ENCODE measurements at regions of chr12 and their contacts with region 1.

Region 1: DNA sequence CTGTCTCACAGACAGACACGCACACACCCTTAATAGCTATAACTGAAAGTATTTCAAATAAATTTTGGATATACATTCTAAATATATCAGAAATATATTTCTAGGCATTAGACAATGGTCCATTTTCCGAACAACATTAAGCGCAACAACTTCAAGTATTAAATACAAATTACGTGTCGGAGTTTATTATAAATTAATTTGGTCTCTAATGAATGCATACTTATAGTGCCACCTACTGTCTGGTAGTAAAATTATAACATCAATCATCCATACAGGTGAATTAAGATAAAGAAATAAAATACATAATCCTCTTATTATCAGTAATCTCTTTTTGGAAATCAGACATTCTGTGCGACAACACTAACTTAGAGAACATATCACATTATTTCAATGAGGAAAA is 27.2 kb upstream of the CMAS start:
- DNase-seq: no peak
- H3K4me3 ChIP-seq: no peak overlapping the region
- H3K27ac ChIP-seq: no peak overlapping the region
- H3K4me1 ChIP-seq: peaks cover 6% of the 10 kb centered on the region
- H3K27me3 ChIP-seq: no peaks in the 10 kb centered on the region
- CTCF ChIP-seq: no peak

Region 2: GRCh38 chr12:21697904-21698630 is 320.8 kb before region 1 on chr12:
- dilution Hi-C with region 1: loop called (anchors 25 kb)
- DNase-seq: no peak
- H3K4me3 ChIP-seq: no peak overlapping the region
- H3K27ac ChIP-seq: no peak overlapping the region
- H3K4me1 ChIP-seq: no peaks in the 10 kb centered on the region
- H3K27me3 ChIP-seq: no peaks in the 10 kb centered on the region
- CTCF ChIP-seq: peak in 2 of 3 experiments; percentile 15 to 36

Measured in keratinocyte (primary cell).